ENCODE measurements at regions of chr11 and their contacts with region 1.

Region 1: DNA sequence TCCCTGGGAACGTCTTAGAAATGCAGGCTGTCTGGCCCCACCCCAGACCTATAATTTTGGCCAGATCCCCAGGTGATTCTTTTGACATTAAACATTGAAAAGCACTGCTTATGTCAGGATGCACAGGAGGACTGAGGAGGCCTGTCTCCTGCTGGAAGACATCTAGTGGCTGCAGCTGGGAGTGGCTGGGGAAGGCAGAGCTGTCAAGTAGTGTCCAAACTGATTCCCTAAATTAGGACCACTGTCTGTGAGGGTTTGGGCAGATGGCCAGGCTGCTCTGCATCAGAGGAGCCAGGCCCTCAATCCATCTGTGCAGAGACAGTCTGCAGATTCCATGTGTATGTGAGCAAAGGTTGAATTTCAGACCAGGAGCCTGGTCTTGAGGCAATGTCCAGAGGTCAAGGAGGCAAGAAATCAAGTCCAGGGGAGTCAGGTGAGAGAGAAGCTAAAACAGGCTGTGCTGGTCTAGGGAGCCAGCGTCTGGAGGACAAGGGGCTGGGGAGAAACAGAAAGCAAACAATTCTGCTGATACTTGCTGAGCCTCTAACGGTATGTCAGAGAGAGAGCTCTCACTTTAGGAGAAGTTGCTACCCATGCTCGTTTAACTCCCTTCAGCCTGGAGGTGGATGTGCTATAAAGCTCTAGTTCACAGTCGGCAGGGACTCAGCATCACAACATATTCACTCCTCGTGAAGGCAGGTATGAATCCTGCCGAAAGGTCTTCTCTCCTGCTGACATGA is 15.3 kb upstream of the SYTL2 start:
- DNase-seq: no peak
- H3K4me3 Mint-ChIP-seq: peak overlapping the region; percentile 1
- H3K27ac Mint-ChIP-seq: peak overlapping the region; percentile 87
- H3K4me1 Mint-ChIP-seq: peaks cover 74% of the 10 kb centered on the region
- H3K27me3 Mint-ChIP-seq: no peaks in the 10 kb centered on the region

Region 2: GRCh38 chr11:85627998-85628770 is 198.1 kb before region 1 on chr11 and contains the start of gene TMEM126B:
- intact Hi-C with region 1: loop called (anchors 1 kb)
- DNase-seq: peak; percentile 96
- H3K4me3 Mint-ChIP-seq: peak within 1 kb of the TSS; percentile 97
- H3K27ac Mint-ChIP-seq: peak within 1 kb of the TSS; percentile 94
- H3K4me1 Mint-ChIP-seq: peaks cover 52% of the 10 kb centered on the region
- H3K27me3 Mint-ChIP-seq: peaks cover 6% of the 10 kb centered on the region
- total RNA-seq, gene TMEM126B: 52.5 and 57.2 TPM in 2 replicates

Region 3: GRCh38 chr11:85694386-85694980 is 131.8 kb before region 1 on chr11:
- intact Hi-C with region 1: loop called (anchors 1 kb)
- DNase-seq: no peak
- H3K4me3 Mint-ChIP-seq: no peak overlapping the region
- H3K27ac Mint-ChIP-seq: no peak overlapping the region
- H3K4me1 Mint-ChIP-seq: peaks cover 51% of the 10 kb centered on the region
- H3K27me3 Mint-ChIP-seq: peaks cover 4% of the 10 kb centered on the region

Region 4: GRCh38 chr11:85766721-85767161 is 59.5 kb before region 1 on chr11:
- intact Hi-C with region 1: loop called (anchors 1 kb)
- DNase-seq: no peak
- H3K4me3 Mint-ChIP-seq: no peak overlapping the region
- H3K27ac Mint-ChIP-seq: no peak overlapping the region
- H3K4me1 Mint-ChIP-seq: peaks cover 84% of the 10 kb centered on the region
- H3K27me3 Mint-ChIP-seq: no peaks in the 10 kb centered on the region

Region 5: GRCh38 chr11:85787809-85788805 is 38.2 kb before region 1 on chr11:
- intact Hi-C with region 1: loop called (anchors 2 kb)
- DNase-seq: no peak
- H3K4me3 Mint-ChIP-seq: peak overlapping the region; percentile 20
- H3K27ac Mint-ChIP-seq: peak overlapping the region; percentile 48
- H3K4me1 Mint-ChIP-seq: peaks cover 67% of the 10 kb centered on the region
- H3K27me3 Mint-ChIP-seq: no peaks in the 10 kb centered on the region